A673 (cell line): ENCODE measurements at regions of chr18 and their contacts with region 1.

Region 1: DNA sequence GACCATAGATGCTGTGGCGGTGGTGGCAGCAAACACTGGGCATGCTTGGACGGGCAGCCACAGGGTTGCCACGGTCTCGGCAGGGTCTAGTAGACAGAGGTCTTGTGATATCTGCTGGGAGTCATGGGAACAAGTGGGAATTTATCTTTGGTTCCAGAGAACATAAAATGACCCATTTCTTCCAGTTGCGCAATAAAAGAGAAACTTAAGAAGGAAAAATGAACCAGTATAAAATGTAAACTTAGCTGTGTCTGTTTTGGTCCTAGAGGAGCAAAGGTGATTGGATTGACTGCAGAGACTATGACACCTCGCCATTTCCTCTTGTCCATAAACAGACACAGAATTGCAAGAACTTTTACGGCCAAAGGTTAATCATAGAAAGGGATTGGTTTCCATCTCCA is 132.6 kb upstream of the RBBP8 start:
- DNase-seq: no peak
- H3K4me3 ChIP-seq: no peak overlapping the region
- H3K27ac ChIP-seq: no peak overlapping the region
- H3K4me1 ChIP-seq: peaks cover 6% of the 10 kb centered on the region
- H3K27me3 ChIP-seq: peaks cover 4% of the 10 kb centered on the region
- CTCF ChIP-seq: no peak

Region 2: GRCh38 chr18:22983175-22983574 is 182.6 kb after region 1 on chr18:
- CTCF ChIA-PET with region 1: interaction called, 10 read pairs
- POLR2A ChIA-PET with region 1: no interaction called
- intact Hi-C with region 1: no loop called
- DNase-seq: peak; percentile 52
- H3K4me3 ChIP-seq: no peak overlapping the region
- H3K27ac ChIP-seq: no peak overlapping the region
- H3K4me1 ChIP-seq: peaks cover 6% of the 10 kb centered on the region
- H3K27me3 ChIP-seq: no peaks in the 10 kb centered on the region
- CTCF ChIP-seq: peak; percentile 63

Region 3: GRCh38 chr18:23412351-23412964 is 611.9 kb after region 1 on chr18:
- CTCF ChIA-PET with region 1: no interaction called
- POLR2A ChIA-PET with region 1: no interaction called
- intact Hi-C with region 1: loop called (anchors 5 kb)
- DNase-seq: no peak
- H3K4me3 ChIP-seq: no peak overlapping the region
- H3K27ac ChIP-seq: no peak overlapping the region
- H3K4me1 ChIP-seq: no peaks in the 10 kb centered on the region
- H3K27me3 ChIP-seq: no peaks in the 10 kb centered on the region
- CTCF ChIP-seq: no peak